ENCODE measurements at regions of chr19 and their contacts with region 1.

Region 1: GRCh38 chr19:49473868-49474544 is at the start of gene FLT3LG:
- DNase-seq: peak; percentile 68
- H3K4me3 ChIP-seq: peak within 1 kb of the TSS; percentile 62 to 93 (median 73)
- H3K27ac ChIP-seq: no peak within 1 kb of the TSS
- H3K4me1 ChIP-seq: peaks cover 6% of the 10 kb centered on the region
- H3K27me3 ChIP-seq: no peaks in the 10 kb centered on the region
- CTCF ChIP-seq: peak; percentile 99 to 100
- POLR2A ChIP-seq: no peak
- total RNA-seq, gene FLT3LG: 4.7 and 5.7 TPM in 2 replicates

Region 2: GRCh38 chr19:49451430-49452181 is 22.4 kb before region 1 on chr19 and contains the start of gene PIH1D1:
- CTCF ChIA-PET with region 1: interaction called, 17 read pairs
- POLR2A ChIA-PET with region 1: interaction called, 8 read pairs
- dilution Hi-C with region 1: no loop called
- intact Hi-C with region 1: loop called (anchors 2 kb)
- DNase-seq: peak; percentile 99
- H3K4me3 ChIP-seq: peak within 1 kb of the TSS; percentile 43 to 84 (median 80)
- H3K27ac ChIP-seq: peak within 1 kb of the TSS; percentile 83
- H3K4me1 ChIP-seq: peaks cover 11% of the 10 kb centered on the region
- H3K27me3 ChIP-seq: no peaks in the 10 kb centered on the region
- CTCF ChIP-seq: no peak
- POLR2A ChIP-seq: peak; percentile 93
- total RNA-seq, gene PIH1D1: 84.1 and 86.9 TPM in 2 replicates

Region 3: GRCh38 chr19:49487277-49488045 is 13.5 kb after region 1 on chr19 and contains the start of gene RPL13A:
- CTCF ChIA-PET with region 1: interaction called, 4 read pairs
- POLR2A ChIA-PET with region 1: interaction called, 4 read pairs
- dilution Hi-C with region 1: no loop called
- intact Hi-C with region 1: loop called (anchors 1 kb)
- DNase-seq: peak; percentile 100
- H3K4me3 ChIP-seq: peak within 1 kb of the TSS; percentile 60 to 94 (median 90)
- H3K27ac ChIP-seq: peak within 1 kb of the TSS; percentile 89
- H3K4me1 ChIP-seq: peaks cover 12% of the 10 kb centered on the region
- H3K27me3 ChIP-seq: no peaks in the 10 kb centered on the region
- CTCF ChIP-seq: no peak
- POLR2A ChIP-seq: peak; percentile 99
- total RNA-seq, gene RPL13A: 2,291 and 2,318 TPM in 2 replicates

Region 4: DNA sequence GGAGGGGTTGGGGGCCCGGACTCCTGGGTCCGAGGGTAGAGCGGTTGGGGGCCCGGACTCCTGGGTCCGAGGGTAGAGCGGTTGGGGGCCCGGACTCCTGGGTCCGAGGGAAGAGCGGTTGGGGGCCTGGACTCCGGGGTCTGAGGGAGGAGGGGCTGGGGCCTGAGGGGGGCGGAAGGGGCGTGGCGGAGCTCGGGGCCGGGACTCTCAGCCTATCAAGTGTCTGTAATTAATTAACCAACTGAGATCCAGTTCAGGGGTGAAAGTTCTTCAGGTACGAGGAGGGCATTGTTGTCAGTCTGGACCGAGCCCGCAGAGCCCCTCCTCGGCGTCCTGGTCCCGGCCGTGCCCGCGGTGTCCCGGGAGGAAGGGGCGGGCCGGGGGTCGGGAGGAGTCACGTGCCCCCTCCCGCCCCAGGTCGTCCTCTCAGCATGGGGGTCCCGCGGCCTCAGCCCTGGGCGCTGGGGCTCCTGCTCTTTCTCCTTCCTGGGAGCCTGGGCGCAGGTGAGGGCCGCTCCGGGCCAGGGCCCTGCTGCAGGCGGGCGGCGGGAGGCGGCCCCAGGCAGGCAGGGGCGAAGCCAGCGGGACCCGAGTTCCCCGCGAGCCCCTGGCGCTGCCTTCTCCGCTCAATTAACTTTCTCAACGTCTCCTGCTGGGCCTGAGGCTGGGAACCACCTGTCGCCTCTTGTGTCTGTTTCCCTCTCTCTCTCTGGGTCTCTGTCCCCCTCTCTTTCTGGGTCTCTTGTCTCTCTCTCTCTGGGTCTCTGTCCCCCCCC is 39.2 kb after region 1 on chr19:
- CTCF ChIA-PET with region 1: no interaction called
- POLR2A ChIA-PET with region 1: no interaction called
- dilution Hi-C with region 1: no loop called
- intact Hi-C with region 1: loop called (anchors 1 kb)
- DNase-seq: peak; percentile 44
- H3K4me3 ChIP-seq: peak overlapping the region; percentile 60 to 81 (median 66)
- H3K27ac ChIP-seq: peak overlapping the region; percentile 6
- H3K4me1 ChIP-seq: peaks cover 15% of the 10 kb centered on the region
- H3K27me3 ChIP-seq: no peaks in the 10 kb centered on the region
- CTCF ChIP-seq: no peak
- POLR2A ChIP-seq: no peak